CD4-positive, alpha-beta memory T cell (primary cell): ENCODE measurements at regions of chr15 and their contacts with region 1.

Region 1: DNA sequence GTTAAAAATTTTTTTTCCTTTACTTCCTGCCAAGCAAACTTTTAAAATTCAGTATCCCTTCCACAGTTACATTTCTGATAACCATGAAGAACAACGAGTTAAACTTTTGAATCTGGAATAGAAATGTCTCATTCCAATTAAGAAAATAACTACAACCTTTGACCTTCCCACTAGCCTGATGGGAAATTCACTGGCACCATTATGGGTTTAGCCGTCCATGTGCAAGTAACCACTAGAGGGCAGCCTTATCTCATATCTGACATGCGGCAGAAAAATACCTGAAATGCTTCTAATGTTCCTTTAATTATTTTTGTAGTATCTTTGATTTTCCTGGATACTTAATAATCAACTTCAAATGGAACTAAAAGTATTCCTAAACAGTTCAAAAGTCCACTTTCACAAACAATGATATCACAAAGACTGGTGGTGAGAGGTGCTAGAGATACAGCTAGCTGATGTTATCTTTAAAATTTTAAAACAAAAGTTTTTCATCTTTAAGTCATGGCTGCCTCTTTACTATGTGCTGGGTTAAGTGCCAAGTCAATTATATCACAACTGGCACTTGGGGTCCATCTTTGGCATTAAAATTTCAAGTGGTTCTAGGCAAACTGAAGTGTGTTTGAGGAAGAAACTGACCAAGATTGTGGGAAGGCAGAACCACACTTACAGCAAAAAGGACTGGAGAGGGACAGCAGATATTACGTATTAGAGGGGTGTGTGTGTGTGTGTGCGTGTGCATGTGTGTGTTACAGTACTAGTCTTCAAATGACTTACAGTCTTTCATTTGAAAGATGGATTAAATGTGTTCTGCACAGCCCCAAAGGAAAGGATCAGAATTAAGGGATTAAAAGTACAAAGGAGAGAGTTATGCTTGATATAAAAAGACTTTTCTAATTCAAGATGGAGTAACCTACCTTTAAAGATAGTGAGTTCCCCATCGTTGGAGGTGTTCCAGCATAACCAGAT is 107.1 kb upstream of the ICE2 start:
- DNase-seq: peak; percentile 77 to 83 (median 79)
- H3K4me3 ChIP-seq: no peak overlapping the region
- H3K4me3 Mint-ChIP-seq: peak overlapping the region; percentile 69 to 97 (median 82)
- H3K27ac ChIP-seq: peak overlapping the region; percentile 92
- H3K27ac Mint-ChIP-seq: peak overlapping the region; percentile 91 to 98 (median 93)
- H3K4me1 ChIP-seq: peaks cover 91% of the 10 kb centered on the region
- H3K4me1 Mint-ChIP-seq: peaks cover 68 to 92% (median 80%) of the 10 kb centered on the region in 4 donors
- H3K27me3 ChIP-seq: no peaks in the 10 kb centered on the region
- H3K27me3 Mint-ChIP-seq: no peaks in the 10 kb centered on the region

Region 2: DNA sequence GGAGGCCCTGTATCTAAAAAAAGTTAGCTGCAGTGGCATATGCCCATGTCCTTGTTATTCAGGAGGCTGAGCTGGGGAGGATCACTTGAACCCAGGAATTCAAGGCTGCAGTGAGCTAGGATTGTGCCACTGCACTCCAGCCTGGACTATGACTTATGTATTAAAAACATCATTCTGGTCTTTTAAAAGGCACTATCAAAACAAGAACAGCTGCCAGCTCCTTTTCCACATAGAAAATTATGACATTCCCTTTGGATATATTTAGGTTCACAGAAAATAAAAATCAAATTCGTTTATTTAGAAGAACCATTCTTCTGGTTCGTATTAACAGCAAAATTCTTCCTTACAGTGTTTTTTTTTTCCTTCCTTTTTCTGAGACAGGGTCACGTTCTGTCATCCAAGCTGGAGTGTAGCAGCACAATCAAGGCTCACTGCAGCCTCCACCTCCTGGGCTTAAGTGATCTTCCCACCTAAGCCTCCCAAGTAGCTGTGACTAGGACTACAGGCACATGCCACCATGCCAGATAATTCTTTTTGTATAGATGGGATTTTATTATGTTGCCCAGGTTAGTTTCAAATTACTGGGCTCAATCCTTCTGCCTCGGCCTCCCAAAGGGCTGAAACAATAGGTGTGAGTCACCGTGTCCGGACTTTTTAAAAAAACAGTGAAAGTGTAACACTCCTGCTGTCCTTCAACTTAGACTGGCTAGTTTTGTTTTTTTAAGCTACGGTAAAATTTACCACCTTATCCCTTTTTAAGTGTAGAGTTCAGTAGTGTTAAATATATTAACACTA is 121.0 kb before region 1 on chr15:
- CTCF ChIA-PET with region 1: no interaction called
- POLR2A ChIA-PET with region 1: no interaction called
- intact Hi-C with region 1: no loop called
- DNase-seq: no peak
- H3K4me3 ChIP-seq: no peak overlapping the region
- H3K4me3 Mint-ChIP-seq: no peak overlapping the region
- H3K27ac ChIP-seq: no peak overlapping the region
- H3K27ac Mint-ChIP-seq: peak overlapping the region in 2 of 7 donors; percentile 36 to 50
- H3K4me1 ChIP-seq: no peaks in the 10 kb centered on the region
- H3K4me1 Mint-ChIP-seq: peaks cover 3 to 11% (median 4%) of the 10 kb centered on the region in 4 donors
- H3K27me3 ChIP-seq: no peaks in the 10 kb centered on the region
- H3K27me3 Mint-ChIP-seq: no peaks in the 10 kb centered on the region

Region 3: GRCh38 chr15:60507596-60508424 is 78.2 kb before region 1 on chr15:
- CTCF ChIA-PET with region 1: interaction called, 7 read pairs
- POLR2A ChIA-PET with region 1: interaction called, 22 read pairs
- intact Hi-C with region 1: loop called (anchors 1 kb)
- DNase-seq: peak; percentile 66 to 79 (median 78)
- H3K4me3 ChIP-seq: no peak overlapping the region
- H3K4me3 Mint-ChIP-seq: peak overlapping the region in 6 of 8 donors; percentile 0 to 67 (median 28)
- H3K27ac ChIP-seq: peak overlapping the region; percentile 21
- H3K27ac Mint-ChIP-seq: peak overlapping the region; percentile 83 to 94 (median 91)
- H3K4me1 ChIP-seq: peaks cover 43% of the 10 kb centered on the region
- H3K4me1 Mint-ChIP-seq: peaks cover 29 to 55% (median 41%) of the 10 kb centered on the region in 4 donors
- H3K27me3 ChIP-seq: no peaks in the 10 kb centered on the region
- H3K27me3 Mint-ChIP-seq: no peaks in the 10 kb centered on the region

Region 4: DNA sequence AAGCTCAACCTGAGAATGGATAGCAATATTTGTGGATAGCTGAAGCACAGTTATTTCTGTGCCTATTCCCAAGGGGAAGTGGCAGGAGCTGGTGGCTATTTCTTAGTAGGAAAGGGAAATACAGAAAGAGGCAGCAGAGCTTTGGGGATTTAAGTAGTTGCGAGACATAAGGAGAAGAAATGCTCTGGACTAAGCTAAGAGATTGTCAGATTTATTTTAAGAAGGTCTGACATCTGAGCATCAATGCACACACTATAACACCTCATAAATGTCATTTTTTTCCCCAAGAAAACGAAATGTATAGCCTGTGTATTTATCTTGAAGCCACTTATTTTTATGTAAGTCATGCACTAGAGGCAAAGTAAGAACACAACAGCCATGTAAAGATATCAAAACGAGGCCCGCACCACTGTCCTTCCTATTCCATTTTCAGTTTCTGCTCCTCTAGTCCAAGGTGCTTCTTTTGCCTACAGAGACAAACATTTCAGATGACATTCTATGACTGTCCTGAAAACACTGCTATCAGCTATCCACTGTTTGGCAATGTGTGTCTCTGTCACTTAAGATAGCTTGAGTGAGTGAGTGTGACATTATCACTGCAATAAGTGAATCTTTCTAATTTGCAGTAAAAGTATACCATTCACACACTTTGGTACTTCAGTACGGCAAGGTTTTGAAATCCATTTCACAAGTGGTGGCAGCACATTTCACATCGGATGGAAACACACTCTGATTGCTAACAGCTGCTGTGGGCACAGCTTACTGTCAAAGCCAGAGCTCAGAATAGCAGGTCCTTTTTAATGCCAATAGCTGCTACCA is 44.3 kb before region 1 on chr15:
- CTCF ChIA-PET with region 1: interaction called, 9 read pairs
- POLR2A ChIA-PET with region 1: interaction called, 381 read pairs
- intact Hi-C with region 1: no loop called
- DNase-seq: no peak
- H3K4me3 ChIP-seq: peak overlapping the region in 1 of 2 donors; percentile 2
- H3K4me3 Mint-ChIP-seq: peak overlapping the region; percentile 64 to 87 (median 80)
- H3K27ac ChIP-seq: peak overlapping the region; percentile 58
- H3K27ac Mint-ChIP-seq: peak overlapping the region; percentile 85 to 99 (median 92)
- H3K4me1 ChIP-seq: peaks cover 100% of the 10 kb centered on the region
- H3K4me1 Mint-ChIP-seq: peaks cover 84 to 100% (median 92%) of the 10 kb centered on the region in 4 donors
- H3K27me3 ChIP-seq: no peaks in the 10 kb centered on the region
- H3K27me3 Mint-ChIP-seq: no peaks in the 10 kb centered on the region

Region 5: DNA sequence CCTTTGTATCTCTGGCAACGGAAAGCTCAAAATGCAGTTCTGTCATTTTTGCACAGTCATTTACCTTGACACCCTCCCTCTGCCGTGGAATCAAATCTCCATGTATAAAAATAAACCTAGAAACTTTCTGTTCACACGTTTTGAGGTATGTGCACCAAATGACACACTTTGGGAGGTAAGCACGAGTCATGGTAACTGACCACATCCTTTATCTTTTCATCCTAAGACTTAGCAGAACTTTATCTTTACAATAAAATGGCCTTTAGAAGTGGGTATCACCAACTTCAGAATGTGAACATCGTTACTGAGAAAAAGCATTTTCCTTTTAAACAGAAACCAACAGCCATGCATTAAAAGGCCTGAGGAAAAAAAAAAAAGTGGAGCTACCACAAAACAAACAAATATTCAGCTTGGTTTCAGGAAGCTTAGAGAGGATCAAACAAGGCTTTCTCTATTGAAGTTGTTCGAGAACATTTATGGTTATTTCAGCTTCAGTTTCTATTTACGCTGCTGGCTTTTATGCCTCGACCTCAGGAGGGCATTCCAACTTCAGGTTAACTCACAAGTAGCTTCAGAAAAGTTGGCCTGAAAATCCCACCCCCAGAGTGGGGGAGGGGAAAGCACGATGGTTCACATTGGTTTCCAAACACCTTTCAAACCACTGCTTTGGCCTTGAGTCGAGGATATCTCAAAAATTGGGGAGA is 64.0 kb after region 1 on chr15:
- CTCF ChIA-PET with region 1: interaction called, 6 read pairs
- POLR2A ChIA-PET with region 1: interaction called, 26 read pairs
- intact Hi-C with region 1: loop called (anchors 2 kb)
- DNase-seq: peak; percentile 73 to 85 (median 81)
- H3K4me3 ChIP-seq: peak overlapping the region in 1 of 2 donors; percentile 46
- H3K4me3 Mint-ChIP-seq: peak overlapping the region; percentile 67 to 92 (median 85)
- H3K27ac ChIP-seq: peak overlapping the region; percentile 66
- H3K27ac Mint-ChIP-seq: peak overlapping the region; percentile 93 to 99 (median 97)
- H3K4me1 ChIP-seq: peaks cover 46% of the 10 kb centered on the region
- H3K4me1 Mint-ChIP-seq: peaks cover 36 to 55% (median 47%) of the 10 kb centered on the region in 4 donors
- H3K27me3 ChIP-seq: no peaks in the 10 kb centered on the region
- H3K27me3 Mint-ChIP-seq: no peaks in the 10 kb centered on the region

Region 6: GRCh38 chr15:60787837-60788691 is 202.0 kb after region 1 on chr15:
- CTCF ChIA-PET with region 1: interaction called, 10 read pairs
- POLR2A ChIA-PET with region 1: interaction called, 18 read pairs
- intact Hi-C with region 1: loop called (anchors 1 kb)
- DNase-seq: peak; percentile 43 to 64 (median 51)
- H3K4me3 ChIP-seq: peak overlapping the region in 1 of 2 donors; percentile 17
- H3K4me3 Mint-ChIP-seq: peak overlapping the region; percentile 56 to 78 (median 64)
- H3K27ac ChIP-seq: peak overlapping the region; percentile 53
- H3K27ac Mint-ChIP-seq: peak overlapping the region; percentile 72 to 97 (median 95)
- H3K4me1 ChIP-seq: peaks cover 42% of the 10 kb centered on the region
- H3K4me1 Mint-ChIP-seq: peaks cover 30 to 50% (median 38%) of the 10 kb centered on the region in 4 donors
- H3K27me3 ChIP-seq: no peaks in the 10 kb centered on the region
- H3K27me3 Mint-ChIP-seq: no peaks in the 10 kb centered on the region

Region 7: GRCh38 chr15:60859996-60860494 is 274.0 kb after region 1 on chr15:
- CTCF ChIA-PET with region 1: interaction called, 81 read pairs
- POLR2A ChIA-PET with region 1: interaction called, 26 read pairs
- intact Hi-C with region 1: loop called (anchors 1 kb)
- DNase-seq: no peak
- H3K4me3 ChIP-seq: no peak overlapping the region
- H3K4me3 Mint-ChIP-seq: no peak overlapping the region
- H3K27ac ChIP-seq: no peak overlapping the region
- H3K27ac Mint-ChIP-seq: peak overlapping the region in 1 of 7 donors; percentile 1
- H3K4me1 ChIP-seq: peaks cover 6% of the 10 kb centered on the region
- H3K4me1 Mint-ChIP-seq: peaks cover 22 to 44% (median 33%) of the 10 kb centered on the region in 4 donors
- H3K27me3 ChIP-seq: no peaks in the 10 kb centered on the region
- H3K27me3 Mint-ChIP-seq: no peaks in the 10 kb centered on the region

Region 8: GRCh38 chr15:60916679-60917460 is 330.8 kb after region 1 on chr15:
- CTCF ChIA-PET with region 1: interaction called, 62 read pairs
- POLR2A ChIA-PET with region 1: interaction called, 33 read pairs
- intact Hi-C with region 1: loop called (anchors 1 kb)
- DNase-seq: peak; percentile 85 to 95 (median 88)
- H3K4me3 ChIP-seq: no peak overlapping the region
- H3K4me3 Mint-ChIP-seq: peak overlapping the region in 5 of 8 donors; percentile 18 to 72 (median 57)
- H3K27ac ChIP-seq: peak overlapping the region; percentile 55
- H3K27ac Mint-ChIP-seq: peak overlapping the region; percentile 82 to 98 (median 94)
- H3K4me1 ChIP-seq: peaks cover 12% of the 10 kb centered on the region
- H3K4me1 Mint-ChIP-seq: peaks cover 7 to 17% (median 10%) of the 10 kb centered on the region in 4 donors
- H3K27me3 ChIP-seq: no peaks in the 10 kb centered on the region
- H3K27me3 Mint-ChIP-seq: no peaks in the 10 kb centered on the region

Region 9: DNA sequence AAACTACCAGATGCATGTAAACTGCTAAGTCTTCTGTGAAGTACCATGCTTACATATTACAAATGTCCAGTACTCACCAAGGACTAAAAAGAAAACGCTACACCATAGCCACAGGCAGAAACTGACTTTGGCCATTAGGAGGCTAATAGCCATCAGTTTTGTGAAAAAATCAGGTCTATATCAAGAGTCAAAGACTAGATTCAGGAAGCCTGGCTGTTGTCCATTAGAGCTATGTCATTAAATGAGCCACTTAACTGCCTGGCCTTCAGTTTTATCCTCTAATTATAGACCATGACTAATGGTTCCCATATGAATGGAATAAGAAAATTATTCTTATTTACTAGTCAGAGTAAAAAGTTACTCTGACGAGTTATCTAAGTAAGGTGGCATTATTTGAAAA is 1330.1 kb after region 1 on chr15:
- CTCF ChIA-PET with region 1: no interaction called
- POLR2A ChIA-PET with region 1: no interaction called
- intact Hi-C with region 1: no loop called
- DNase-seq: no peak
- H3K4me3 ChIP-seq: no peak overlapping the region
- H3K4me3 Mint-ChIP-seq: no peak overlapping the region
- H3K27ac ChIP-seq: no peak overlapping the region
- H3K27ac Mint-ChIP-seq: no peak overlapping the region
- H3K4me1 ChIP-seq: no peaks in the 10 kb centered on the region
- H3K4me1 Mint-ChIP-seq: no peaks in the 10 kb centered on the region
- H3K27me3 ChIP-seq: no peaks in the 10 kb centered on the region
- H3K27me3 Mint-ChIP-seq: no peaks in the 10 kb centered on the region